Ascending aorta (tissue), 2 donors: ENCODE measurements at regions of chr13 and their contacts with region 1.

Region 1: DNA sequence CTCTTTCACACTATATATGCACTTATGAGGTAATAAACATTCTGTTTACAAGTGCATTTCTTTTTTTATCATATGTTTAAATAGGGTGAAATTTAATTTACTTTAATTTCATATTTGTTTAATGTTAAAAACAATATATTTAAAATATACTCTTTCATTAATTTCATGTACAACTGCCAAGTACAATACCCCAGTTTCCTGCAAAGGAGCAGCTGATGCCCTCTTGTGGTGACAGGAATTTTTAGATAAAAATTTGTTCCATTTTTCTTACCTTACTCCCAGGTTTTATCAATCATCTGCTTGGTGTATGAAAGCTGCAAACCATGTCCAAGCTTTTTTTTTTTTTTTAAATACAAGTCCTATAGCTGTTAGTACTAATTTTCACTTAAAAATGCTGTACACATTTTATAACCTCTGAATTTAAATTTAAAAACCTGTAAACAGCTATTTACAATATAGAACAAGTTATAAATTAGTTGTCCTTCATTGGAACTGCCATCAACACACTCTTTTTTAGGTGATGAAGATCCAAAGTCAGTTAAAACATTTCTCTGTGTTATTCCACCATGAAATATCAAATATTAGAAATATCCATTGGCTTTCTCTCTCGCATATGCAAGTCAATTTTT is 4.9 kb downstream of the PCDH20 start:
- DNase-seq: no peak
- H3K4me3 ChIP-seq: no peak overlapping the region
- H3K27ac ChIP-seq: no peak overlapping the region
- H3K4me1 ChIP-seq: peaks cover 0 to 2% of the 10 kb centered on the region in 2 donors
- H3K27me3 ChIP-seq: no peaks in the 10 kb centered on the region
- CTCF ChIP-seq: peak in 2 of 3 experiments; percentile 33 to 46

Region 2: GRCh38 chr13:60163478-60164233 is 1247.1 kb before region 1 on chr13 and contains the start of gene DIAPH3:
- intact Hi-C with region 1: loop called (anchors 10 kb)
- DNase-seq: peak; percentile 89 to 97
- H3K4me3 ChIP-seq: peak within 1 kb of the TSS; percentile 84 to 86
- H3K27ac ChIP-seq: peak within 1 kb of the TSS; percentile 82 to 96
- H3K4me1 ChIP-seq: peaks cover 0 to 15% of the 10 kb centered on the region in 2 donors
- H3K27me3 ChIP-seq: no peaks in the 10 kb centered on the region
- CTCF ChIP-seq: no peak
- total RNA-seq, gene DIAPH3: 0.32 TPM

Region 3: GRCh38 chr13:60396783-60397703 is 1013.7 kb before region 1 on chr13 and contains the start of gene TDRD3:
- intact Hi-C with region 1: loop called (anchors 2 kb)
- DNase-seq: peak; percentile 40 to 89
- H3K4me3 ChIP-seq: peak within 1 kb of the TSS; percentile 86 to 89
- H3K27ac ChIP-seq: peak within 1 kb of the TSS; percentile 98 to 99
- H3K4me1 ChIP-seq: peaks cover 0 to 17% of the 10 kb centered on the region in 2 donors
- H3K27me3 ChIP-seq: no peaks in the 10 kb centered on the region
- CTCF ChIP-seq: peak; percentile 68 to 89 (median 87)
- total RNA-seq, gene TDRD3: 3.0 TPM

Region 4: DNA sequence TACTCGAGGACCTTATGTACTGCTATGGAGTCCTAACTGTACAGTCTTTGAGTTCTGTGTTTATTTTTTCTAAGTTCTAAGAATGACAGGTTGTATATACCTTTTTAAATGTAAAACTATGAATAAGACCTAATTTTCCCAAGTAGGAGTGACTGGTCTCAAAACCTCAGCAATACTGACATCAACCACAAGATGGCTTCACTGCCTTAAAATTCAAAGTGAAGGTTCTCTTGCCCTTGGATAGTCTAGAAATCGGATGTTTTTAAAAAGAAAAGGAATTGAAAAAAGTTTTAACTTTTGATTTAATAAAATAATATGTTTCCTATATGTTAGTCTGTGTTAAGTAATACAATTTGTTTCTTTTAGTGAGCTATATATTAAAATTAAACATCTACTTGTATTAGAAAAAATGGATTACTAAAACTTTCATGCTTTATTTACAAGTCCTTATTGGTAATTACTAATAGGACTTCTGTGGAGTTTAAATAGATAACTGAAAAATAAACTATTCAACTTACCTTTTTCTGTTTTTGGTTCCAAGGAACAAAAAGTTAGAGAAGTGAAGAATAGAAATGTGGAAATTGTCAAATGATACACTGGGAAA is 961.8 kb before region 1 on chr13:
- intact Hi-C with region 1: loop called (anchors 5 kb)
- DNase-seq: no peak
- H3K4me3 ChIP-seq: no peak overlapping the region
- H3K27ac ChIP-seq: no peak overlapping the region
- H3K4me1 ChIP-seq: peaks cover 0 to 5% of the 10 kb centered on the region in 2 donors
- H3K27me3 ChIP-seq: no peaks in the 10 kb centered on the region
- CTCF ChIP-seq: peak in 2 of 3 experiments; percentile 72 to 77

Region 5: DNA sequence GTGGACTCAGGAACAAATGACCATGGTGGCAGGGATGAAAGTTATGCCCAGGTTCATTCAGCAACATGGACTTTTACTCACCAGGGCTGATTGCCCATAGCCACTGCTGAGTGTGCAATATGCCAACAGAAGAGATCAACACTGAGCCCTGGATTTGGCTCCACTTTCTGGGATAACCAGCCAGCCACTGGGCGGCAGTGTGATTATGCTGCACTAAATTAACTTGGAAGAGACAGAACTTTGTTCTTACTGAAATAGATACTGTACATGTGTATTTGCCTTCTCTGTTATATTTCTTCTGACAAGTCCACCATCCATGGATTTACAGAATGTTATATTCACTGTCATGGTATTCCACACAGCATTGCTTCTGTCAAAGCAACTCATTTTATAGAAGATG is 756.4 kb before region 1 on chr13:
- intact Hi-C with region 1: loop called (anchors 10 kb)
- DNase-seq: no peak
- H3K4me3 ChIP-seq: no peak overlapping the region
- H3K27ac ChIP-seq: no peak overlapping the region
- H3K4me1 ChIP-seq: no peaks in the 10 kb centered on the region
- H3K27me3 ChIP-seq: no peaks in the 10 kb centered on the region
- CTCF ChIP-seq: peak in 1 of 3 experiments; percentile 51

Region 6: GRCh38 chr13:61162636-61163035 is 248.1 kb before region 1 on chr13:
- intact Hi-C with region 1: loop called (anchors 10 kb)
- DNase-seq: no peak
- H3K4me3 ChIP-seq: no peak overlapping the region
- H3K27ac ChIP-seq: peak overlapping the region; percentile 68 to 69
- H3K4me1 ChIP-seq: peaks cover 0 to 14% of the 10 kb centered on the region in 2 donors
- H3K27me3 ChIP-seq: no peaks in the 10 kb centered on the region
- CTCF ChIP-seq: no peak

Region 7: DNA sequence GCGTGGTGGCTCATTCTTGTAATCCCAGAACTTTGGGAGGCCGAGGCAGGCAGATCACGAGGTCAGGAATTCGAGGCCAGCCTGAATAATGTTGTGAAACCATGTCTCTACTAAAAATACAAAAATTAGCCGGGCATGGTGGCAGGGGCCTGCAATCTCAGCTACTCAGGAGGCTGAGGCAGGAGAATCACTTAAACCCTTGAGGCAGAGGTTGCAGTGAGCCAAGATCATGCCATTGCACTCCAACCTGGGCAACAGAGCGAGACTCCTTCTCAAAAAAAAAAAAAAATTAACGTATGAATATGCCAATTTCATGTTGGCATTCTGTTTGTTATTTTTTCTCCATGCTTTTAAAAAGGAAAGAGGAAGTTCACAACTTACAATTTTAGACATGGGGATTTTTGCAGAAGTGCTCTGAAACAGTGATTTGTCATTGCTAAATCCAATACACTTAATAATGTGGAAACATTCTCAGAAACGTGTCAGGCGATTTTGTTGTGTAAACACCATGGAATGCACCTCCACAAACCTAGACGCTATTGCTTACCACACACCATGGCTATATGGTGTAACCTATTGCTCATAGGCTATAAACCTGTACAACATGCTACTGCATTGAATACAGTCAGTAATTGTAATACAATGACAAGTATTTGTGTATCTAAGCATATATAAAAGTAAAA is 120.7 kb after region 1 on chr13:
- intact Hi-C with region 1: no loop called
- DNase-seq: no peak
- H3K4me3 ChIP-seq: no peak overlapping the region
- H3K27ac ChIP-seq: no peak overlapping the region
- H3K4me1 ChIP-seq: no peaks in the 10 kb centered on the region
- H3K27me3 ChIP-seq: no peaks in the 10 kb centered on the region
- CTCF ChIP-seq: no peak